ENCODE measurements at regions of chr2 and their contacts with region 1.

Region 1: GRCh38 chr2:70069049-70069448 is 18.2 kb upstream of the PCBP1 start:
- DNase-seq: peak; percentile 46 to 80 (median 47)
- H3K4me3 ChIP-seq: no peak overlapping the region
- H3K4me3 Mint-ChIP-seq: no peak overlapping the region
- H3K27ac ChIP-seq: peak overlapping the region in 1 of 2 donors; percentile 86
- H3K27ac Mint-ChIP-seq: peak overlapping the region; percentile 68 to 90 (median 77)
- H3K4me1 ChIP-seq: peaks cover 12 to 19% of the 10 kb centered on the region in 2 donors
- H3K4me1 Mint-ChIP-seq: peaks cover 28% of the 10 kb centered on the region
- H3K27me3 ChIP-seq: no peaks in the 10 kb centered on the region
- H3K27me3 Mint-ChIP-seq: no peaks in the 10 kb centered on the region
- CTCF ChIP-seq: no peak

Region 2: GRCh38 chr2:70029814-70030409 is 39.1 kb before region 1 on chr2:
- intact Hi-C with region 1: loop called in 1 of 2 experiments (anchors 5 kb)
- DNase-seq: peak; percentile 87 to 96 (median 94)
- H3K4me3 ChIP-seq: peak overlapping the region in 1 of 3 experiments; percentile 2
- H3K4me3 Mint-ChIP-seq: no peak overlapping the region
- H3K27ac ChIP-seq: peak overlapping the region; percentile 81 to 95
- H3K27ac Mint-ChIP-seq: peak overlapping the region; percentile 95 to 98 (median 97)
- H3K4me1 ChIP-seq: peaks cover 25 to 30% of the 10 kb centered on the region in 2 donors
- H3K4me1 Mint-ChIP-seq: peaks cover 34% of the 10 kb centered on the region
- H3K27me3 ChIP-seq: no peaks in the 10 kb centered on the region
- H3K27me3 Mint-ChIP-seq: peaks cover 0 to 4% (median 1%) of the 10 kb centered on the region in 3 donors
- CTCF ChIP-seq: no peak

Region 3: DNA sequence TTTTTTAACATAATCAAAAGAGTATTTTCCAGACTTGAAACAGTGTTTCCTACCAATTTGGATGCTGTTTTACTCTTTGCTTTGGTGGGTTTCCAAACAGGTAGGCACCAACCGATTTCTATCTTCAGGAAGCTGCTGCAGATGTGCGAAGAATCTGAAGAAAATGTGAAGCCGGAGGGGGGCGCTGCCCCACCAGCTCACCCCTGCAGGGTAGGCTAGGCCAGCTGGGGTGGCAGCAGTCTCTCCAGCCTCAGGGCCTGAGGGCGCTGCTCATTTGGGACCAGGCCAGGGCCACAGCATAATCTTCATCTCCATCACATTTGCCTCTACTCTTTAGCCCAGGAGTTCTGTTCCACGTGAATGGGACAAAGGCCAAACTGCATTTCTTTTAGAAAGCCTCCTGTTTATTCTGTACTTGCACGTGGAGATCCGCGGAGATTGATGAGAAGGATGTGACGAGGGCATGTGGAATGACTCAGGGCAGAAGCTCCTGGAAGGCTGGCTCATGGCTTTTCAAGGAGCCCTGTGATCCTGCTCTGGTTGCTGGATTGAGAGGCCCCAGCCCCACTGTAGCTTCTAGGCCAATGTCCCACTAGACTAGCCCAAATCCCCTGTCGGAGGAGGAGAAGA is 317.0 kb after region 1 on chr2:
- intact Hi-C with region 1: no loop called
- DNase-seq: no peak
- H3K4me3 ChIP-seq: no peak overlapping the region
- H3K4me3 Mint-ChIP-seq: no peak overlapping the region
- H3K27ac ChIP-seq: no peak overlapping the region
- H3K27ac Mint-ChIP-seq: peak overlapping the region in 1 of 7 donors; percentile 23
- H3K4me1 ChIP-seq: no peaks in the 10 kb centered on the region
- H3K4me1 Mint-ChIP-seq: no peaks in the 10 kb centered on the region
- H3K27me3 ChIP-seq: no peaks in the 10 kb centered on the region
- H3K27me3 Mint-ChIP-seq: peaks cover 2 to 4% (median 2%) of the 10 kb centered on the region in 3 donors
- CTCF ChIP-seq: no peak